AG04450 (cell line): ENCODE measurements at regions of chr10 and their contacts with region 1.

Region 1: GRCh38 chr10:15313047-15313446 is 58.0 kb downstream of the FAM171A1 start:
- DNase-seq: no peak
- H3K4me3 ChIP-seq: no peak overlapping the region
- H3K27ac ChIP-seq: no peak overlapping the region
- H3K27me3 ChIP-seq: no peaks in the 10 kb centered on the region
- CTCF ChIP-seq: no peak

Region 2: DNA sequence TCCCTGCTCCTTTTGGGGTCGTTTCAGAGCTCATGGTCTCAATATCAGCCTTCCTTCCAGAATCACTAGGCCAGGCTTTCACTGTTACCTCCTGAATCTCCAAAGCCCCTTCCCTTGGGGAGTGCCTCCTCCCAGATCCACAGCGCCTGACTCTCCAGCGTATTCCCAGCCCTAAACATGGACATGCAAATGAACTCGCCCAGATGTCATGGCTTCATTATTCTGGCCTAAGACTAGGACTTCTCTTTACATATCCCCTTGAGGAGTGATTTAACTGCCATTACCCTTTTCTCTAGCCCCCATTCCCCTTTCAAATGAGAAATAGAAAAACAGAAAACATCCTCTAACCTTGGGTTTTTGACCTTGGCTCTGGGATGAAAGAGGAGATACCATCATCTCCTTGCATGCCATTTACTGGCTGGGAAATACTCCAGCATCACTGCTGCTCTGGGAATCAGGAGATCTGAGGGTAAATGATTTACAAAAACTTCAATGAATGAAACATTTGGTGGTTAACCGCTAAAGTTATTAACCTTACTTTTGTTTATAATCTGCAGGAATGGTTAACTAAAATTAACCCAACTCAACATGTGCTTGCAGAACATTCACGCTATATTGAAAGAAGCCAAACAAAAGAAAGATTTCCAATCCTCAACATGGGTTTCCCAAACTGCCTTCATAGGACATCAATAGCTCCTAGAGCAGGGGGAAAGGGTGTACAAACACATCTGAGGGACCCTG is 21.0 kb after region 1 on chr10:
- CTCF ChIA-PET with region 1: no interaction called
- POLR2A ChIA-PET with region 1: interaction called, 10 read pairs
- DNase-seq: peak; percentile 76
- H3K4me3 ChIP-seq: no peak overlapping the region
- H3K27ac ChIP-seq: no peak overlapping the region
- H3K27me3 ChIP-seq: no peaks in the 10 kb centered on the region
- CTCF ChIP-seq: no peak